CD8-positive, alpha-beta T cell (primary cell): ENCODE measurements at regions of chr1 and their contacts with region 1.

Region 1: DNA sequence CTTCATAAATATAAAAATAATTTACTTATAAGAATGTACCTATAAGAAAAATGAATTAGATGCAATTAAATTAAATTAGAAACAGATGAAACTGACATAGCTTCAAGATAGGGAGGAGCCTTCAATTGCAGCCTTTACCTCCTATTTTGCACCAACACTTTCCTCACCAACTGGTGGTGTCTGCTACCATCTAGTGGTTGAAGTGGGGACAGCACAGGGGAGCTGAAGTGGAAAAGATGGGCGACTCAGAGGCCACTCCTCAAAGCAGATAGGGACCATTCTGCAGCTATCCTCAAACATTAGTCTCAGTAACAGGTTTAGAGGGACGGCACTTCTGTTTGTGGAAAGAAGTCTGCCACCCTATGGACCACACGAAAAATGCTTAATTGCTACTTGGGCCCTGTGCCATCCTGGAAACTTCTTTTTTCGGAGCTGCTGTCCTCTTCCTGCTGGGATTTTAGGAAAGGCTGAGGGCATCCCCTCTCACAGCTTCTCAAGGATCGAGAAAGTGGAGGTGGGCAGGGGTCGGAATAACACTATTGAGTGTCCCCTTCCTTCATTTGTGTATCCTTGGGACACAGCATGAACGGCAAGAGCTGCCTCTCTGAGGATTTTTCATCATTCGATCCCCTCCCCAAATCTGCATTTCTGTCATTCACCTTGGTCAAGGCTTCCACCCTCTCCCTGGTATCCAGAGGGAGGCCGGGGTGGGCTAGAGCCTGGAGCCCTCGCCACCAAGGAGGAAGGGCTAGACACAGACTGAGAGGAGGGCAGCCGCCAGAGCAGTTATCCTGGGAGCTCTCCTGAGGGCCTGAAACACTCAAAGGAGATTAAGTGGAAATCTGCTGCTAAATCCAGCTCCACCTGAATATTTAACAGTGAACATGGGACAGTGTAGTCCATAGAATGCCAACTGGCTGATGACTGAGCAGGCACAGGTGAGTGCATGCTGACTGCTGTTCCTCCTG is 9.6 kb downstream of the PROK1 start:
- DNase-seq: peak; percentile 74 to 90 (median 83)
- ATAC-seq: peak; percentile 99
- H3K4me3 ChIP-seq: no peak overlapping the region
- H3K4me3 Mint-ChIP-seq: no peak overlapping the region
- H3K27ac ChIP-seq: no peak overlapping the region
- H3K27ac Mint-ChIP-seq: no peak overlapping the region
- H3K4me1 ChIP-seq: no peaks in the 10 kb centered on the region
- H3K4me1 Mint-ChIP-seq: no peaks in the 10 kb centered on the region
- H3K27me3 ChIP-seq: no peaks in the 10 kb centered on the region
- H3K27me3 Mint-ChIP-seq: no peaks in the 10 kb centered on the region
- CTCF ChIP-seq: peak; percentile 98

Region 2: DNA sequence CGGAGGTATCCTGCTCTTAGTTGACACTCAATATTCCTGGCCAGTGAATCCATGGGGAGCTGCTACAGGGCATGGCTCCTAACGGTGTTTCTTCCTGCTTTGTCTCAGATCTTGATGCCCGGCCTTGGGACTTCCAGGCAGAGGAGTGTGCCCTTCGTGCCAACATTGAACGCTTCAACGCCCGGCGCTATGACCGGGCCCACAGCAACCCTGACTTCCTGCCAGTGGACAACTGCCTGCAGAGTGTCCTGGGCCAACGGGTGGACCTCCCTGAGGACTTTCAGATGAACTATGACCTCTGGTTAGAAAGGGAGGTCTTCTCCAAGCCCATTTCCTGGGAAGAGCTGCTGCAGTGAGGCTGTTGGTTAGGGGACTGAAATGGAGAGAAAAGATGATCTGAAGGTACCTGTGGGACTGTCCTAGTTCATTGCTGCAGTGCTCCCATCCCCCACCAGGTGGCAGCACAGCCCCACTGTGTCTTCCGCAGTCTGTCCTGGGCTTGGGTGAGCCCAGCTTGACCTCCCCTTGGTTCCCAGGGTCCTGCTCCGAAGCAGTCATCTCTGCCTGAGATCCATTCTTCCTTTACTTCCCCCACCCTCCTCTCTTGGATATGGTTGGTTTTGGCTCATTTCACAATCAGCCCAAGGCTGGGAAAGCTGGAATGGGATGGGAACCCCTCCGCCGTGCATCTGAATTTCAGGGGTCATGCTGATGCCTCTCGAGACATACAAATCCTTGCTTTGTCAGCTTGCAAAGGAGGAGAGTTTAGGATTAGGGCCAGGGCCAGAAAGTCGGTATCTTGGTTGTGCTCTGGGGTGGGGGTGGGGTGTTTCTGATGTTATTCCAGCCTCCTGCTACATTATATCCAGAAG is 406.7 kb before region 1 on chr1:
- CTCF ChIA-PET with region 1: interaction called, 8 read pairs
- POLR2A ChIA-PET with region 1: no interaction called
- intact Hi-C with region 1: loop called in 1 of 2 experiments (anchors 2 kb)
- DNase-seq: peak; percentile 29 to 79 (median 70)
- ATAC-seq: peak; percentile 92
- H3K4me3 ChIP-seq: no peak overlapping the region
- H3K4me3 Mint-ChIP-seq: no peak overlapping the region
- H3K27ac ChIP-seq: no peak overlapping the region
- H3K27ac Mint-ChIP-seq: no peak overlapping the region
- H3K4me1 ChIP-seq: no peaks in the 10 kb centered on the region
- H3K4me1 Mint-ChIP-seq: no peaks in the 10 kb centered on the region
- H3K27me3 ChIP-seq: no peaks in the 10 kb centered on the region
- H3K27me3 Mint-ChIP-seq: no peaks in the 10 kb centered on the region
- CTCF ChIP-seq: peak; percentile 85

Region 3: GRCh38 chr1:110196917-110197765 is 263.4 kb before region 1 on chr1:
- CTCF ChIA-PET with region 1: interaction called, 313 read pairs
- POLR2A ChIA-PET with region 1: interaction called, 6 read pairs
- intact Hi-C with region 1: loop called (anchors 1 kb)
- DNase-seq: peak in 8 of 9 experiments; percentile 15 to 71 (median 55)
- ATAC-seq: peak; percentile 99
- H3K4me3 ChIP-seq: no peak overlapping the region
- H3K4me3 Mint-ChIP-seq: no peak overlapping the region
- H3K27ac ChIP-seq: no peak overlapping the region
- H3K27ac Mint-ChIP-seq: no peak overlapping the region
- H3K4me1 ChIP-seq: no peaks in the 10 kb centered on the region
- H3K4me1 Mint-ChIP-seq: no peaks in the 10 kb centered on the region
- H3K27me3 ChIP-seq: no peaks in the 10 kb centered on the region
- H3K27me3 Mint-ChIP-seq: no peaks in the 10 kb centered on the region
- CTCF ChIP-seq: peak; percentile 94

Region 4: GRCh38 chr1:110312188-110313121 is 148.1 kb before region 1 on chr1:
- CTCF ChIA-PET with region 1: interaction called, 30 read pairs
- POLR2A ChIA-PET with region 1: no interaction called
- intact Hi-C with region 1: loop called (anchors 2 kb)
- DNase-seq: peak; percentile 49 to 85 (median 77)
- ATAC-seq: peak; percentile 99
- H3K4me3 ChIP-seq: no peak overlapping the region
- H3K4me3 Mint-ChIP-seq: no peak overlapping the region
- H3K27ac ChIP-seq: no peak overlapping the region
- H3K27ac Mint-ChIP-seq: no peak overlapping the region
- H3K4me1 ChIP-seq: peaks cover 2% of the 10 kb centered on the region
- H3K4me1 Mint-ChIP-seq: peaks cover 3% of the 10 kb centered on the region
- H3K27me3 ChIP-seq: no peaks in the 10 kb centered on the region
- H3K27me3 Mint-ChIP-seq: no peaks in the 10 kb centered on the region
- CTCF ChIP-seq: peak; percentile 87

Region 5: GRCh38 chr1:110328274-110328673 is 132.3 kb before region 1 on chr1:
- CTCF ChIA-PET with region 1: interaction called, 11 read pairs
- POLR2A ChIA-PET with region 1: no interaction called
- intact Hi-C with region 1: no loop called
- DNase-seq: no peak
- ATAC-seq: no peak
- H3K4me3 ChIP-seq: no peak overlapping the region
- H3K4me3 Mint-ChIP-seq: no peak overlapping the region
- H3K27ac ChIP-seq: no peak overlapping the region
- H3K27ac Mint-ChIP-seq: no peak overlapping the region
- H3K4me1 ChIP-seq: no peaks in the 10 kb centered on the region
- H3K4me1 Mint-ChIP-seq: no peaks in the 10 kb centered on the region
- H3K27me3 ChIP-seq: no peaks in the 10 kb centered on the region
- H3K27me3 Mint-ChIP-seq: no peaks in the 10 kb centered on the region
- CTCF ChIP-seq: no peak

Region 6: GRCh38 chr1:110412576-110412975 is 48.0 kb before region 1 on chr1:
- CTCF ChIA-PET with region 1: interaction called, 89 read pairs
- POLR2A ChIA-PET with region 1: interaction called, 3 read pairs
- intact Hi-C with region 1: loop called (anchors 1 kb)
- DNase-seq: peak; percentile 25 to 72 (median 60)
- ATAC-seq: peak; percentile 41
- H3K4me3 ChIP-seq: no peak overlapping the region
- H3K4me3 Mint-ChIP-seq: no peak overlapping the region
- H3K27ac ChIP-seq: no peak overlapping the region
- H3K27ac Mint-ChIP-seq: no peak overlapping the region
- H3K4me1 ChIP-seq: peaks cover 6% of the 10 kb centered on the region
- H3K4me1 Mint-ChIP-seq: peaks cover 18% of the 10 kb centered on the region
- H3K27me3 ChIP-seq: no peaks in the 10 kb centered on the region
- H3K27me3 Mint-ChIP-seq: no peaks in the 10 kb centered on the region
- CTCF ChIP-seq: peak; percentile 64

Region 7: DNA sequence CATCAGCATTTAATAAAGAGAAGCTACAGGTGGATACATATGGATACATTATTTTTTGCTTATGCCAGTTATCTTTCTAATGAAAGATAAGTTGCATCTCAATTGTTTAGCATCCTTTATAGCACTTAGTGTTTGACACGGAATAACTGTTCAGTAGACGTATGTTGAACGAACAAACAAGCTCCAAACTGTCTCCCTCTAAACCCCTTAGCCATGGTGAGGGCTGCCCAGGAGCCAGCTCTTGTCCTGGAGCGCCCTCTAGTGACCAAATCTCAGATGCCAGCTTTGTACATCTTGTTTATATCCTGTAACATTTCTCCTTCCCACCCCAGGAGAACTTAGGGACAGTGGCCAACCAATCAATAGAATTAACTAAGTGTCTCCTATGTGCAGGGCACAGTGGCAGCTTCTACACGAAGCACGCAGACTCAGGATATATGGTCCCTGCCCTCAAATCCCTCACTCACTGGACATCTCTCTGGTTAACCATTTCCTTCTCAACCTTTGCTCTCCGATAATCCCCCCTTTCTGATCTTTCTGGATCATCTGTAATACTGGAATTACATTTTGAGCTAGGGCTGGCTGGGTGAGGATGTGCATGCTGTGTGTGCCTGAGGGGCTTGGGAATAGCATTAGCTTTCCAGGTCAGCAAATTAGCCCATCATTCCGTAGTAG is 35.5 kb after region 1 on chr1:
- CTCF ChIA-PET with region 1: interaction called, 29 read pairs
- POLR2A ChIA-PET with region 1: no interaction called
- intact Hi-C with region 1: no loop called
- DNase-seq: peak; percentile 58 to 82 (median 77)
- ATAC-seq: peak; percentile 80
- H3K4me3 ChIP-seq: no peak overlapping the region
- H3K4me3 Mint-ChIP-seq: no peak overlapping the region
- H3K27ac ChIP-seq: no peak overlapping the region
- H3K27ac Mint-ChIP-seq: no peak overlapping the region
- H3K4me1 ChIP-seq: no peaks in the 10 kb centered on the region
- H3K4me1 Mint-ChIP-seq: no peaks in the 10 kb centered on the region
- H3K27me3 ChIP-seq: no peaks in the 10 kb centered on the region
- H3K27me3 Mint-ChIP-seq: no peaks in the 10 kb centered on the region
- CTCF ChIP-seq: peak; percentile 78

Region 8: GRCh38 chr1:110570307-110570706 is 109.8 kb after region 1 on chr1:
- CTCF ChIA-PET with region 1: no interaction called
- POLR2A ChIA-PET with region 1: no interaction called
- intact Hi-C with region 1: no loop called
- DNase-seq: no peak
- ATAC-seq: no peak
- H3K4me3 ChIP-seq: no peak overlapping the region
- H3K4me3 Mint-ChIP-seq: no peak overlapping the region
- H3K27ac ChIP-seq: no peak overlapping the region
- H3K27ac Mint-ChIP-seq: no peak overlapping the region
- H3K4me1 ChIP-seq: no peaks in the 10 kb centered on the region
- H3K4me1 Mint-ChIP-seq: no peaks in the 10 kb centered on the region
- H3K27me3 ChIP-seq: no peaks in the 10 kb centered on the region
- H3K27me3 Mint-ChIP-seq: peaks cover 25% of the 10 kb centered on the region
- CTCF ChIP-seq: no peak